Naive thymus-derived CD4-positive, alpha-beta T cell (primary cell): ENCODE measurements at regions of chr5 and their contacts with region 1.

Region 1: DNA sequence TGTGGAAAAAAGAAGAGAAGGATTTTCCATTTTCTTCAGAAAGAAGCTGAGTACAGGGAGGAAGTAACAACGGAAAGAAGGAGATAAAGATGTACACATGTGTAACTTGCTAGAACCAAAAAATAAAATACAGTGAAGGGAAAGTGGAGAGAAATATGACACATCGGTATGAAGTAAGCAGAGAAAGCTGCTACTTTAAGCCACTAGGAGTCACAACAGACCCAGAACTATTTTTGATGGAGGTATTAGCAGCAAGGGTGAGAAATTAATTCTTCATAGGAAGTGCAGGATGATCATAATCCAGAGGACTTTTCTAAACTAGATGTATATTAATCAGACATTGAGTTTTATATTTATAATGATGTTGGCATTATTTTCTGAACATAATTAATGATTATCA is 88.5 kb downstream of the FAM174A start:
- DNase-seq: peak in 5 of 9 donors; percentile 4 to 44 (median 19)
- ATAC-seq: peak; percentile 68
- H3K4me3 ChIP-seq: no peak overlapping the region
- H3K4me3 Mint-ChIP-seq: no peak overlapping the region
- H3K27ac ChIP-seq: no peak overlapping the region
- H3K27ac Mint-ChIP-seq: no peak overlapping the region
- H3K4me1 ChIP-seq: no peaks in the 10 kb centered on the region
- H3K4me1 Mint-ChIP-seq: no peaks in the 10 kb centered on the region
- H3K27me3 ChIP-seq: no peaks in the 10 kb centered on the region
- H3K27me3 Mint-ChIP-seq: peaks cover 0 to 5% (median 3%) of the 10 kb centered on the region in 5 donors

Region 2: DNA sequence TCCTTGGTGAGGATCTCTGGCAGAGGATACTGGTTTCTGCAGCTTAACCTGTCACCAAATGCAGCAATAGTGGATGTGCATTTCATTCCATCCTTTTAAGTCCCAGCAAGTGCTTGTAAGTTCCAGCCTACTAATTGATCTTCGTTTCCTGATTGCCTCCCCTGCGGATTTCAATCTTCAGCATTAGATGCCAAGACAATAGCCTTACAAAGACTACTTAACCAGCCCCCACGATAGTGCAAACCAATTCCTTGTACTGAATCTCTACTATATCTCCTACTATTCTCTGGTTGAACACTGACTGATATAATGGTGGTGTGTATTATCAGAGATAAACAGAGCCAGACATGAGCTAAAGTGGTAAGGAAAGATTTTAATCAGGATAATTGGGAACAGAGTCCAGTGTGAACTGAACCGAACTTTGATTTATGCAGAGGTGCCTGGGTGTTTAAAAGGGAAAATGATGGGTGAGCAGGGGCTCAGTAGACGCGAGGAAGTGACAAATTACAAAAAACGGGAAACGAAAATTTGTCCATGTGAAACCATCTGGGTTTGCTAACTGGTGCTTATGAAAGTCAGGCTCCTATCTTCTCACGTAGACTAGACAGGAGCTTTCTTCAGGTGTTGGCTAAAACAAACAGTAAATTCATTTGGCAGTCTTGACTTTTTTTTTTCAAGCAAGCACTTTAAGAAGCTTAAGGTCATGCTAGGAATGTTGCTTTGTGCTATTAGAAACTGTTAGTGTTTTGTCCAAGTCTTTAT is 386.2 kb after region 1 on chr5:
- CTCF ChIA-PET with region 1: interaction called, 3 read pairs
- POLR2A ChIA-PET with region 1: no interaction called
- intact Hi-C with region 1: loop called in 1 of 2 experiments (anchors 1 kb)
- DNase-seq: no peak
- ATAC-seq: no peak
- H3K4me3 ChIP-seq: no peak overlapping the region
- H3K4me3 Mint-ChIP-seq: no peak overlapping the region
- H3K27ac ChIP-seq: no peak overlapping the region
- H3K27ac Mint-ChIP-seq: no peak overlapping the region
- H3K4me1 ChIP-seq: no peaks in the 10 kb centered on the region
- H3K4me1 Mint-ChIP-seq: no peaks in the 10 kb centered on the region
- H3K27me3 ChIP-seq: no peaks in the 10 kb centered on the region
- H3K27me3 Mint-ChIP-seq: no peaks in the 10 kb centered on the region

Region 3: DNA sequence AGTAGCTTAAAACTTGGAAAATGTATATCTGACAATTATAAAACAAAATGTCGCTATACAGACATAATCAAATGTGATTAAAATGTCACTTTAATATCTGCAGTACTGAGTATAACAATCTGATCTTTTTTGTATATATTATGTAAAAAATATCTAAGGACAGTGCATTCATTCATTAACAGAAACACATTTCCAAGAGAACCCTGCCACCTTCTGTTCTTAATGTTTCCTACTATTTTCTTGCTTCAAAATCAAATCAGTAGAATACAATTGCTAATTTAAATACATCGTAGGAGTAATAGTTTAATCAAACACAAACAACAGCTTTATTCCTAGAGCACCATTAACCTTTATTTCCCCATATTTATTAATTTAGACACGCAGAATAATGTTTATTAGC is 422.0 kb after region 1 on chr5:
- CTCF ChIA-PET with region 1: interaction called, 7 read pairs
- POLR2A ChIA-PET with region 1: no interaction called
- intact Hi-C with region 1: loop called (anchors 1 kb)
- DNase-seq: peak in 5 of 9 donors; percentile 4 to 20 (median 8)
- ATAC-seq: no peak
- H3K4me3 ChIP-seq: no peak overlapping the region
- H3K4me3 Mint-ChIP-seq: no peak overlapping the region
- H3K27ac ChIP-seq: no peak overlapping the region
- H3K27ac Mint-ChIP-seq: no peak overlapping the region
- H3K4me1 ChIP-seq: no peaks in the 10 kb centered on the region
- H3K4me1 Mint-ChIP-seq: peaks cover 0 to 10% (median 9%) of the 10 kb centered on the region in 7 donors
- H3K27me3 ChIP-seq: no peaks in the 10 kb centered on the region
- H3K27me3 Mint-ChIP-seq: peaks cover 0 to 2% (median 0%) of the 10 kb centered on the region in 5 donors

Region 4: DNA sequence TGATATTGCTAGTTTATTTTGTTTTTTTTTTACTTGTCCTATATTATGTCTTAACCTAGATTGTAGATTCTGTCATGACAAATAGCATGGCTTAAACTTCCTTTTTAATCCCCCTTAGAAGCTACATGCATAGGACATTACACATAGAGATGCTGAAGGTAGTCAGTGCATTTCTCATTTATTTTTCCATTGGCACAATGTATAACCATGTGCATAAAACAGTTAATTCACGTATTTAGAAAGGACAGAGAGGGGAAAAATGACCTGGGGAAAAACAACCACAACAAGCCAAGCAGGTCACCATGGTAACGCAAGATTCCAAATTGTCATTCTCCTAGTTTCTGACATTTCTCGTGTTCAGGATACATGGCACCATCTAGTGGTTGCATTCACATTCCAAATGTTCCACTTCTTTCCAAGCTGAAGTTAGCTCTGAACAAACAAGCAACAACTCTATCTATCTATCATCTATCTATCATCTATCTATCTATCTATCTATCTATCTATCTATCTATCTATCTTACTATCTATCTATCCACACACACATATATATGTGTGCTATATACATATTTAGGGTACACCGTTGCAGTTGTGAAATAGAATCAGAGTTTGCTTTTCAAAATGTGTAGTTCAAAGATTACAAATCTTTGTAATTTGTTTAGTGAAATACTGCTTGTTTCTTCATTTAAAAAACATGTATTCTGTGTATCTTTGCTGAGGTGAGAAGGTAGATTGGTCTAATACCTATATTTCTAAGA is 766.6 kb after region 1 on chr5:
- CTCF ChIA-PET with region 1: no interaction called
- POLR2A ChIA-PET with region 1: no interaction called
- intact Hi-C with region 1: loop called in 1 of 2 experiments (anchors 1 kb)
- DNase-seq: peak in 4 of 9 donors; percentile 0 to 9 (median 4)
- ATAC-seq: no peak
- H3K4me3 ChIP-seq: no peak overlapping the region
- H3K4me3 Mint-ChIP-seq: no peak overlapping the region
- H3K27ac ChIP-seq: no peak overlapping the region
- H3K27ac Mint-ChIP-seq: no peak overlapping the region
- H3K4me1 ChIP-seq: no peaks in the 10 kb centered on the region
- H3K4me1 Mint-ChIP-seq: no peaks in the 10 kb centered on the region
- H3K27me3 ChIP-seq: no peaks in the 10 kb centered on the region
- H3K27me3 Mint-ChIP-seq: peaks cover 0 to 8% (median 0%) of the 10 kb centered on the region in 5 donors

Region 5: GRCh38 chr5:101977729-101978345 is 1354.1 kb after region 1 on chr5:
- CTCF ChIA-PET with region 1: no interaction called
- POLR2A ChIA-PET with region 1: no interaction called
- intact Hi-C with region 1: loop called in 1 of 2 experiments (anchors 5 kb)
- DNase-seq: peak in 3 of 9 donors; percentile 6 to 25 (median 9)
- ATAC-seq: no peak
- H3K4me3 ChIP-seq: no peak overlapping the region
- H3K4me3 Mint-ChIP-seq: no peak overlapping the region
- H3K27ac ChIP-seq: no peak overlapping the region
- H3K27ac Mint-ChIP-seq: no peak overlapping the region
- H3K4me1 ChIP-seq: no peaks in the 10 kb centered on the region
- H3K4me1 Mint-ChIP-seq: no peaks in the 10 kb centered on the region
- H3K27me3 ChIP-seq: no peaks in the 10 kb centered on the region
- H3K27me3 Mint-ChIP-seq: peaks cover 0 to 4% (median 0%) of the 10 kb centered on the region in 5 donors

Region 6: DNA sequence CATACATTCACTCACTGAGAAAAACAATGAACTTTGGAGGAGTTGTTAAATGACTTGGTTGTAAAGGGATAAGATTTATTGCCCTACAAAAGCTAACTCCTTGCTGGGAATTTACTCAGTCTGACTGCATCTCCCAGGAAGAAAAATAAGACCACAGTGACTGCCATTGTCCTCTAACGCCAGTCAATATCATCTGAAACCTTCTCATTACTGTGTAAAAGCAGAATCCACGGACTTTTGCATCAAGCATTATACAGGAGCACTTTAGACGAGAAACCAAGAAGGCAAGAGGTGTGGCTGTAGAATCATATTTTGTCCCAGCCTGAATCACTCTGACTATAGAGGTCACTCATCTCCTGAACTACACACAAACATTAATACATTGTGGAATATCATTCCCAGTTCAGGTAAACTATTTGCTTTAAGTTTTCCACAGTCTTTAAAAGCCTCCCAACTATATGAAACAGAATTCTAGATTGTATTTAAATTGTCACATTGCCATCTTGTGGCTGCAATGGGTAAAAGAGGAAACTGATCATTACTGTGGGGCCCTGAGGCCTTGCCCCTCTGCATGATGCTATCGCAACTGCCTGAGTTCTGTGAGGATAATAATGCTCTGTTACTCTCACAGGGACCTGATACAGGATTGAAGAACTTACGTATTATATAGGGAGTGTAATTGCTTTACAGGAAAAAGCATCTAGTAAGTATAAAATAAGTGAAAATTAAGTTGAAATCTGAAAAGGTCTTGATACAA is 1529.5 kb after region 1 on chr5:
- CTCF ChIA-PET with region 1: no interaction called
- POLR2A ChIA-PET with region 1: no interaction called
- intact Hi-C with region 1: loop called in 1 of 2 experiments (anchors 10 kb)
- DNase-seq: peak in 3 of 9 donors; percentile 1 to 25 (median 1)
- ATAC-seq: peak; percentile 61
- H3K4me3 ChIP-seq: no peak overlapping the region
- H3K4me3 Mint-ChIP-seq: peak overlapping the region in 2 of 10 donors; percentile 19 to 46
- H3K27ac ChIP-seq: no peak overlapping the region
- H3K27ac Mint-ChIP-seq: peak overlapping the region in 1 of 9 donors; percentile 37
- H3K4me1 ChIP-seq: no peaks in the 10 kb centered on the region
- H3K4me1 Mint-ChIP-seq: no peaks in the 10 kb centered on the region
- H3K27me3 ChIP-seq: no peaks in the 10 kb centered on the region
- H3K27me3 Mint-ChIP-seq: peaks cover 0 to 5% (median 0%) of the 10 kb centered on the region in 5 donors